Right ventricle myocardium superior (tissue), 1 donor: ENCODE measurements at regions of chr16 and their contacts with region 1.

Region 1: DNA sequence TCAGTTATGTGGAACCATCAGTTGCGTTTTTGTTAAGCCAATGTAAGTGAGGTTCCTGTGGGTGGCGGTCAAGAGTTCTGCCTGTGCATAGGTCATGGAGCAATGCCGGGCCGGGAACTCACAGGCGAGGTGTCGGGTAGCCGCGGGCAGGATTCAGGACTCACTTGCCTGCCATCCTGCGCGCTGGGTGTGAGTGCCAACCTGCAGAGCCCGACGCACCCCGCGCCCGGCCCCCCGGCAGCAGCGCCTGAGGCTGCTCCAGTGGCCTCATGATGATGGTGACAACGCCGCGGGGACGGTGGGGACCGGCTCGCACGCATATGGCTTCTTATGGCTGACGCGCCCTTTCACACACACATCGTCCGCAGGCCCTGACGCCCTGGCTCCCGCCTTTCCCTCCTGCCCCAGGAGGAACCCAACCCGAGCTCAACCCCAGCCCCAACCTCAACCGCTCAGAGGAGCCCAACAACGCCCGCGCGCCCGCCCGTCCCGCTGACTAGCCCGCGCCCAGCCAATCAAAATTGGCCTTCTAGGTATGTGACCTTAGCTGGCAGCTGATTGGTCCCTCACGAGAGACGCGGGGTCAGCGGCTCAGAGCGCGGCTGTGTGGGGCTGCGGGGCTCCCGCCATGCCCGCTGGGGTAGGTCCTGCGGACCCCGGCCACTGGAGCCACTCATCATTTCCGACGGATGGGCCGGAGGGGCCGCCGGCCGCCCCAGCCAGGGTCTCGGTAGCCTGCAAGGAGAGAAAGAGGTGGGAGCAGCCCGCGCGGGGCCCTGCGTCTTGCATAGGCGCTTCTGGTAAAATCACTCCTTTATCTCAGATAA is at the start of gene C16orf95:
- DNase-seq: peak; percentile 97
- ATAC-seq: peak; percentile 98
- total RNA-seq, gene C16orf95: 2.1 TPM

Region 2: GRCh38 chr16:87391950-87392822 is 75.0 kb after region 1 on chr16 and contains the start of gene MAP1LC3B:
- intact Hi-C with region 1: loop called (anchors 5 kb)
- DNase-seq: peak; percentile 98
- ATAC-seq: peak; percentile 94
- total RNA-seq, gene MAP1LC3B: 118 TPM